Spleen (tissue), 13 donors: ENCODE measurements at regions of chr10 and their contacts with region 1.

Region 1: GRCh38 chr10:32795598-32796183 is 162.3 kb downstream of the ITGB1 start:
- DNase-seq: no peak
- H3K4me3 ChIP-seq: no peak overlapping the region
- H3K27ac ChIP-seq: no peak overlapping the region
- H3K4me1 ChIP-seq: no peaks in the 10 kb centered on the region
- H3K27me3 ChIP-seq: no peaks in the 10 kb centered on the region
- CTCF ChIP-seq: peak in 10 of 11 experiments; percentile 35 to 80 (median 56)
- POLR2A ChIP-seq: no peak

Region 2: DNA sequence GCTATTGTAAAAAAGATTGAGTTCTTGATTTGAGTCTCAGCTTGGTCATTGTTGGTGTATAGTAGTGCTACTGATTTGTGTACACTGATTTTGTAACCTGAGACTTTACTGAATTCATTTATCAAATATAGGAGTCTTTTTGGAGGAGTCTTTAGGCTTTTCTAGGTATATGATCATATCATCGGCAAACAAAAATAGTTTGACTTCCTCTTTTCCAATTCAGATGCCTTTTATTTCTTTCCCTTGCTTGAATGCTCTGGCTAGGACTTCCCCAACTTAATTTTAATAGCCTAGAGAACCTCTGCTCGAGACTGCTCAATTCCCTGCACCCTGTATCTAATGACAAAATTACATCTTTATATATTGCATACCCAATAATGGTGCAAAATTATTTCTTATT is 195.4 kb before region 1 on chr10:
- intact Hi-C with region 1: no loop called
- DNase-seq: no peak
- H3K4me3 ChIP-seq: no peak overlapping the region
- H3K27ac ChIP-seq: no peak overlapping the region
- H3K4me1 ChIP-seq: no peaks in the 10 kb centered on the region
- H3K27me3 ChIP-seq: no peaks in the 10 kb centered on the region
- CTCF ChIP-seq: no peak
- POLR2A ChIP-seq: no peak

Region 3: DNA sequence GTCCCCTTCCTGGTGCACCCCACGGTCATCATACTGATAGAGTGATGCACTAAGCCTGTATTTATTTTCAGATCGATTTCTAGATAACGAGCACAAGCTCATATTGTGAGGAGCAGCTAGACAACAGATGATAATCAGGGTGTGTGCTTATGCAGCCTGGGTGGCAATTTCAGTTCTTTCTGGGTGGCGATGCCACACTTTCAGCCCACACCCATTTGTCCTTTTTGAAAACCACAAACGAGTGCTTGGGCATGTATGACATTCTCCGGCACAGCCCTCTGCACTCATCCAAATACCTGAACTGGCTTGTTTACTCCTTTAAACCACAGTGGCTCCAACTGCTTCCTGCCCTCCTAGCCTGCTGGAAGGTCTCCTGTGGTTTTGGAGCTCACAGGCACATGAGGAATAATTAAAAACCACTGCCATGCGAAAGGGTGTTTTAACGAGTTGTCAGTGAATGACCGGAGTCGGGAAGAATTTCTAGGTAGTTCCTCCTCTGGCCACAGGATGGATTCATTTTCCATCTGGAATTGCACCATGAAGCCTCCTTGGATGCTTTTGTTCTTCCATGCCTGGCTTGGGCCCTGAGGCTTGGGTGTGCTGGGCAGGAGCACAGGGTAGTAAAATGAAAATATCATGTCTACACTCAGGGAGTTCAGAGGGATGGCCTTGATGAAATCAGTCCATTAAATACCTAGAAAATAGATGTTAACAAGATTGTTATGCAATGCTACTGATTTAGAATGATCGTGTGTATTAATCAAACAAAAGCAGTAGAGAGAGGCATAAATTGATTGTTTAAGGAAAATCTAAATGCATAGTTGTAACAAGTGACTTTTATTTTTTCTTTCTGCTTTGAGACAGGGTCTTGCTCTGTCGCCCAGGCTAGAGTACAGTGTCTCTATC is 214.7 kb after region 1 on chr10:
- intact Hi-C with region 1: loop called (anchors 2 kb)
- DNase-seq: no peak
- H3K4me3 ChIP-seq: no peak overlapping the region
- H3K27ac ChIP-seq: peak overlapping the region in 2 of 8 donors; percentile 7 to 37
- H3K4me1 ChIP-seq: peaks cover 3 to 40% (median 18%) of the 10 kb centered on the region in 6 donors
- H3K27me3 ChIP-seq: peaks cover 0 to 14% (median 0%) of the 10 kb centered on the region in 7 donors
- CTCF ChIP-seq: peak in 8 of 11 experiments; percentile 3 to 39 (median 22)
- POLR2A ChIP-seq: no peak

Region 4: GRCh38 chr10:33155720-33156638 is 360.3 kb after region 1 on chr10:
- intact Hi-C with region 1: loop called (anchors 10 kb)
- DNase-seq: no peak
- H3K4me3 ChIP-seq: no peak overlapping the region
- H3K27ac ChIP-seq: no peak overlapping the region
- H3K4me1 ChIP-seq: peaks cover 0 to 18% (median 0%) of the 10 kb centered on the region in 6 donors
- H3K27me3 ChIP-seq: no peaks in the 10 kb centered on the region
- CTCF ChIP-seq: peak in 9 of 11 experiments; percentile 54 to 71 (median 59)
- POLR2A ChIP-seq: no peak

Region 5: DNA sequence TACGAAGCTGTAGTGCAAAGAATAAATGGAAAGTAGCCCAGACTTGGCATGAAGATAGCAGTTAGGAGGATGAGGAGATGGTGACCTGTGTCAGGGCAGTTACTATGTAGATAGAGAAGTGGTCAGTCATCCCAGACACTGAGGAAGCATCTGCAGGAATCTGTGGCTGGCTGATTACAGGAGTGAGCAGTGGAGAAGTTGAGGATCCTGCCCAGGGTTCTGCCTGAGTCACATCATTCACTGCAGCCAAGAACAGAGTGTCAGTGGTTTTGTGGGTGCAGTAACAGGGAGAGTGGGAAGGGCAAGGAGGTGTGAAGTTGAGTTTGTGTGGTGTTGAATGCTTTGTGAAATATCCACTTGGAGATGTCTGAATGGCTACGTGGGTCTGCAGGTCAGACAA is 1215.2 kb after region 1 on chr10:
- intact Hi-C with region 1: no loop called
- DNase-seq: no peak
- H3K4me3 ChIP-seq: no peak overlapping the region
- H3K27ac ChIP-seq: no peak overlapping the region
- H3K4me1 ChIP-seq: no peaks in the 10 kb centered on the region
- H3K27me3 ChIP-seq: no peaks in the 10 kb centered on the region
- CTCF ChIP-seq: no peak
- POLR2A ChIP-seq: no peak